Ascending aorta (tissue), 2 donors: ENCODE measurements at regions of chr2 and their contacts with region 1.

Region 1: GRCh38 chr2:218395797-218396687 is 3.6 kb upstream of the CTDSP1 start:
- DNase-seq: peak; percentile 70 to 96
- H3K4me3 ChIP-seq: peak overlapping the region; percentile 79 to 99
- H3K27ac ChIP-seq: peak overlapping the region; percentile 98
- H3K4me1 ChIP-seq: peaks cover 0 to 9% of the 10 kb centered on the region in 2 donors
- H3K27me3 ChIP-seq: no peaks in the 10 kb centered on the region
- CTCF ChIP-seq: peak; percentile 88 to 98 (median 97)

Region 2: GRCh38 chr2:218229239-218229638 is 166.8 kb before region 1 on chr2:
- intact Hi-C with region 1: loop called (anchors 2 kb)
- DNase-seq: peak in 1 of 2 donors; percentile 67
- H3K4me3 ChIP-seq: peak overlapping the region in 1 of 2 donors; percentile 3
- H3K27ac ChIP-seq: peak overlapping the region; percentile 84 to 91
- H3K4me1 ChIP-seq: peaks cover 15 to 39% of the 10 kb centered on the region in 2 donors
- H3K27me3 ChIP-seq: no peaks in the 10 kb centered on the region
- CTCF ChIP-seq: no peak

Region 3: GRCh38 chr2:218286570-218287459 is 109.2 kb before region 1 on chr2:
- intact Hi-C with region 1: loop called (anchors 2 kb)
- DNase-seq: peak; percentile 91 to 97
- H3K4me3 ChIP-seq: peak overlapping the region; percentile 48 to 68
- H3K27ac ChIP-seq: peak overlapping the region; percentile 98 to 99
- H3K4me1 ChIP-seq: peaks cover 44 to 70% of the 10 kb centered on the region in 2 donors
- H3K27me3 ChIP-seq: no peaks in the 10 kb centered on the region
- CTCF ChIP-seq: no peak

Region 4: GRCh38 chr2:218301176-218301819 is 94.7 kb before region 1 on chr2:
- intact Hi-C with region 1: loop called (anchors 1 kb)
- DNase-seq: peak in 1 of 2 donors; percentile 94
- H3K4me3 ChIP-seq: no peak overlapping the region
- H3K27ac ChIP-seq: peak overlapping the region in 1 of 2 donors; percentile 4
- H3K4me1 ChIP-seq: peaks cover 0 to 21% of the 10 kb centered on the region in 2 donors
- H3K27me3 ChIP-seq: no peaks in the 10 kb centered on the region
- CTCF ChIP-seq: peak; percentile 94 to 96 (median 95)

Region 5: DNA sequence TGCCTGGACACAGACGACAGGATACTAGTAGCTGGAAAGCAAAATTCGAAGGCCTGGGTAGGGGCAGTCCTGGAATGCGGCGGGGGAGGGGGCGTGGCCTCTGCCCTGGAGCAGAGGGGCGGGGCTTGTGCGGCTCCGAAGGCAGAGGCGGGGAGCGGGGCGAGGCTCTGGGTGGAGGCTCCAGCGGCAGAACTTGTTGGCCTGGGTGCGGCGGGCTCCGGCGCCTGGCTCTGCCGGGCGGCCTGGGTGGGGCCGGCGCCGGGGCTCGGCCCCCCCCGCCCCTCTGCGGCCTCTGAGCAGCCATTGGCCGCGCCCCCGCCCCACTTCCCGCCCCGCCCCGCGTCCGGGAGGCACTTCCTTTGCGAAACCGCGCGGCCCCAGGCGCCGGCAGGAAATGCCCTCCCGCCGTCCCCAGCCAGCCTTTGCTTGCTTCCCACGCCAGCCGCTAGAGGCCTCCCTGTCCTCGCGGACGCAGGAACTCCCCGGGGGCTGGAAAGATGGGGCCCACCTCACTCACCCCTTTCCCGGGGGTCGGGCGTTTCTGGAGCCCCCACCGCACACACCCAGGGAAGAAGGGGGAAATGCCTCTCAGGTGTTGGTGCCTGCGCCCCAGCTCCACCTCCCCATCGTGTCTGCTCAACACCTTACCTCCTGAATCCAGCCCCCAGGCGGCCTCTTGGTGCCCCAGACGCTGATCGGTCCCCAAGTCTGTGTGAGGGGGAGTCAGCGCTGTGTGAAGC is 10.3 kb after region 1 on chr2:
- intact Hi-C with region 1: loop called (anchors 1 kb)
- DNase-seq: peak; percentile 85 to 97
- H3K4me3 ChIP-seq: peak overlapping the region; percentile 56 to 65
- H3K27ac ChIP-seq: peak overlapping the region; percentile 88 to 94
- H3K4me1 ChIP-seq: peaks cover 8 to 42% of the 10 kb centered on the region in 2 donors
- H3K27me3 ChIP-seq: no peaks in the 10 kb centered on the region
- CTCF ChIP-seq: peak; percentile 84 to 87 (median 87)